ENCODE measurements at regions of chr15 and their contacts with region 1.

Region 1: GRCh38 chr15:57643826-57644225 is 52.1 kb downstream of the MYZAP start:
- DNase-seq: no peak
- H3K4me3 Mint-ChIP-seq: no peak overlapping the region
- H3K27ac Mint-ChIP-seq: no peak overlapping the region
- H3K4me1 Mint-ChIP-seq: peaks cover 6% of the 10 kb centered on the region
- H3K27me3 Mint-ChIP-seq: peaks cover 12% of the 10 kb centered on the region

Region 2: DNA sequence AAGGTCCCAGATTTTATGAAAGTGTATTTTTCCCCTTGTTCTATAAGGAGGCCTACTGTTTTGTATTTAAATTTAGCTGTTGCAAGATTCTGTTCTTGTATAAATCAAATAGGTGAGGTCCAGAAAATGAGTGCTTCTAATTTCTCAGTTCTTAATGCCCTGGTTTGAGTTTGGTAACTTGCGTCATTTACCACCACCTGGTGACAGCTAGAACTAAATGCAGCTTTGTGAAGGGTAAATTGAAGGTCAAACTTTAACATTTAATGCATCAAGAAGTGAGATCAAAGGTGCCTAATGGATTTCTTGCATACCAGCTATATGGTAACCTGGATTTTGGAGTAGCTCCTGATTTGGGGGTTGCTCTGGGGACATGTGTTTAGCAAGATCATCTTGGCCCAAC is 12.0 kb after region 1 on chr15:
- CTCF ChIA-PET with region 1: interaction called, 11 read pairs
- DNase-seq: no peak
- H3K4me3 Mint-ChIP-seq: no peak overlapping the region
- H3K27ac Mint-ChIP-seq: no peak overlapping the region
- H3K4me1 Mint-ChIP-seq: peaks cover 12% of the 10 kb centered on the region
- H3K27me3 Mint-ChIP-seq: peaks cover 6% of the 10 kb centered on the region

Measured in activated naive CD4-positive, alpha-beta T cell treated with anti-CD3 and anti-CD28 coated beads, Interleukin-2, amount 10 ng/mL, durations not matched to agents 7 days and 5 days (primary cell).